ENCODE measurements at regions of chr9 and their contacts with region 1.

Region 1: DNA sequence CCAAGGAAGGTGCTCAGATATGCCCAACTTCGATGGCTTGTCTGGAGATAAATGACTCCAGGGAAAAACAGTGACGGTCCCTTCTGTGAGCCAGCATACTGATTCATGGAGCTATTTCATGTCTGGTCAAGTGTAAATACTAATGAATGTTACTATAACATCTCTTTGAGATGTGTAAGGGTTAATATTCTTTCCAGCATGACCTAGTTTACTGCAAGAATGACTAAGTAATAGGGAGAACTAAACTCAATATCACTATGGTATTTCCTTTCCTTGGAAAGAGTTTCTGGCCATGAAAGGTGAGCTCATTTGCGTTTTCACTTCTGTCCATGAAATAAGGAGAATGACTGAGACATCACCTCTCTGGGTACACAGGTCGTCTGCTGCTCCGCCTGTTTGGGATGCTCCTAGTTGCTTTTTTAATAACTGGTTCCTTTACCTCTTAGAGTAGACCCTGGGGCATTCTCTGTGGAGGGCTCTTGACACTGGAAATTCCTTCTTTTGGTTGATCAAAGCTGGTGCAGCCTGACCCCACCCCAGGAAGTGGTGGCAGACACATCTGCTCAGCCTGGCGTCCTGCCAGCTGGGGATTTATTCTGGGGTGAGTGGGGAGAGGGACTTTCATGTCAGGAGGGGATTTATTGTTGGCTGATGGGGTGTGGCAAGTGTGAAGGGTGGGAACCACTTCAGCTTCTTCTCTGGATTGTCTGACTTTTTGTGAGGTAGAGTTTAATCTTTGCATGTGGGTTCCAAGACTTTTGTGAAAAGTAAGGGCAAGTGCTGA is 250.0 kb upstream of the MPDZ start:
- DNase-seq: no peak
- ATAC-seq: no peak
- H3K4me3 ChIP-seq: no peak overlapping the region
- H3K27ac ChIP-seq: no peak overlapping the region
- H3K4me1 ChIP-seq: no peaks in the 10 kb centered on the region
- H3K27me3 ChIP-seq: no peaks in the 10 kb centered on the region
- CTCF ChIP-seq: no peak
- EP300 ChIP-seq: no peak
- POLR2A ChIP-seq: no peak
- RAD21 ChIP-seq: no peak

Region 2: DNA sequence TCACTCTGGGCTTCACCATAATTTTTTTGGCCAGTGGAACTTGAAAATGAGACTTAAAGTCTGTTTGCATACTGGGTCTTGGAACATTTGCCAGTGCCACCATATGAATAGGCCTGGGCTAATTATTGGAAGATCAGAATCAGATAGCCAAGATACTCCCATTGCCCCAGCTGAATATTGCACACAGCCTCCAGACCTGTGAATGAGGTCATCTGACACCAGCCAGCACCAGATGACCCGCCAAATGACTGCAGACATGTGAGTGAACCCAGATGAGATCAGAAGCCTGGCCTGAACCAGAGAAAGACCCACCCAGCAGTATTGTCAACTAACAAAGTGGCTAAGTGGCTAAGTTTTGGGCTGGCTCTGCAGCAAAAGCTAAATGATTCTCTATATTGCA is 29.5 kb before region 1 on chr9:
- CTCF ChIA-PET with region 1: no interaction called
- POLR2A ChIA-PET with region 1: no interaction called
- RAD21 ChIA-PET with region 1: no interaction called
- SMC1A ChIA-PET with region 1: no interaction called
- in situ Hi-C with region 1: no loop called
- intact Hi-C with region 1: no loop called
- DNase-seq: no peak
- ATAC-seq: no peak
- H3K4me3 ChIP-seq: no peak overlapping the region
- H3K27ac ChIP-seq: no peak overlapping the region
- H3K4me1 ChIP-seq: no peaks in the 10 kb centered on the region
- H3K27me3 ChIP-seq: no peaks in the 10 kb centered on the region
- CTCF ChIP-seq: no peak
- EP300 ChIP-seq: no peak
- POLR2A ChIP-seq: no peak
- RAD21 ChIP-seq: no peak

Region 3: DNA sequence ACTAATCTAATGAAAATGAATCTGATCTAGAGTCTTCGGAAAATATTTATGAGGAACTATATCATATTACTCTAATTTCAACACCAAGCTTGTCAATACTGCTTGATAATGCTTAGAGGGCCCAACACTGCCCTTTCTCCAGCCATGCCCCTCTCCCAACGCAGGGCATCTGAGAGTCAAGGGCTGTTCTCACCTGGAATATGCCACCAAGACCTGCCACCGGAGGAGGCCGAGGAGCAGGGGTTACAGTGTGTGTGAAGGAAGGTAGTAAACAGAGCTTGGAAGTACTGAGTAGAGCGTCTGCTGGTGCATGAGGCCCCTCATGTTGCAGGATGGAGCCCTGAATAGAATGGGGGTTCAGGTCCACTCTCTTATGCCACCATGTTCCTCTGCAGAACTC is 51.2 kb after region 1 on chr9:
- CTCF ChIA-PET with region 1: no interaction called
- POLR2A ChIA-PET with region 1: no interaction called
- RAD21 ChIA-PET with region 1: no interaction called
- SMC1A ChIA-PET with region 1: no interaction called
- in situ Hi-C with region 1: no loop called
- intact Hi-C with region 1: loop called (anchors 5 kb)
- DNase-seq: no peak
- ATAC-seq: no peak
- H3K4me3 ChIP-seq: no peak overlapping the region
- H3K27ac ChIP-seq: no peak overlapping the region
- H3K4me1 ChIP-seq: no peaks in the 10 kb centered on the region
- H3K27me3 ChIP-seq: no peaks in the 10 kb centered on the region
- CTCF ChIP-seq: no peak
- EP300 ChIP-seq: no peak
- POLR2A ChIP-seq: no peak
- RAD21 ChIP-seq: no peak

Measured in GM12878 (cell line).